Activated B cell treated with CpG ODN at 0.5 μM for 24 hours (primary cell): ENCODE measurements at regions of chr11 and their contacts with region 1.

Region 1: DNA sequence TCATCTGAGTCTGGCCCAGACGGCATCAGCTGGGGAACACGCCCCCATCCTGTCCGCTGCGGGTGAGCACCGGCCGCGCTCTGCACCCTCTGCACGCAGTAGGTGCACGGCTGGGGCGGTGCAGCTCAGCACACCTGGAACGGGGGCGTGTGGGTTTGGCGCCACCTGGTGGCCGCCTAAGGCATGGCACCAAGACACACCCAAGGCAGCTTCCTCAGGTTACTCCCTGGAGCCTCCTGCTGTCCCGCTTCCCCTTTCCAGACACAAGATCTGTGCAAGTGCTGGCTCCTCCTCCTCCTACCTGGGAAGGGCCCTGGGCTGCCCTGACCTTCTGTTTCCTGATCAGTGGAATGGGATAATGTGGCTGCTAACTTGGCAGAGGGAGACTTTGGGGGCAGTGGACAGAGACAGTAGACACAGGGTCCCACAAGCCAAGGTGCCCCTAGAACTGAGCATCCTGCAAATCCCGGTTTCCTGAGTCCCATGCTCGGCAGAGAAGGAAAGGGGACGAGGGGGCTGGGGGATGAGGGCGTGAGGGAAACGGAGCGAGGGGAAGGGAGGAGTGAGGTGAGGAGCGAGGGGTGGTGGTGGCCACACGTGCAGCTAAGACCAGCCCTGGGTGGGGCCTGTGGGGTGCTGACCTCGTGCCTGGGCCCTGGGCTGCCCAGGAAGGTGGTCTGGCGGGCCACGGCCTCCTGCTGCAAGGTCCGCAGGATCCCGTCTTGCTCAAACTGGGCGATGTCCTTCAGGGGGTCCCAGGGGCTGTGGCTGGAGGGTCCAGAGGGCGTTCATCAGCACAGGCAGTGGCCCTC is 34.8 kb upstream of the CARS1 start:
- DNase-seq: peak; percentile 73
- ATAC-seq: peak; percentile 89
- H3K4me3 Mint-ChIP-seq: no peak overlapping the region
- H3K27ac Mint-ChIP-seq: no peak overlapping the region
- H3K4me1 Mint-ChIP-seq: peaks cover 2% of the 10 kb centered on the region
- H3K27me3 Mint-ChIP-seq: peaks cover 3% of the 10 kb centered on the region
- CTCF ChIP-seq: peak; percentile 87

Region 2: GRCh38 chr11:2428322-2428795 is 663.6 kb before region 1 on chr11:
- CTCF ChIA-PET with region 1: no interaction called
- POLR2A ChIA-PET with region 1: no interaction called
- intact Hi-C with region 1: loop called (anchors 2 kb)
- DNase-seq: peak; percentile 76
- ATAC-seq: peak; percentile 97
- H3K4me3 Mint-ChIP-seq: no peak overlapping the region
- H3K27ac Mint-ChIP-seq: no peak overlapping the region
- H3K4me1 Mint-ChIP-seq: no peaks in the 10 kb centered on the region
- H3K27me3 Mint-ChIP-seq: no peaks in the 10 kb centered on the region
- CTCF ChIP-seq: peak; percentile 57

Region 3: GRCh38 chr11:2892215-2893020 is 199.6 kb before region 1 on chr11:
- CTCF ChIA-PET with region 1: interaction called, 16 read pairs
- POLR2A ChIA-PET with region 1: interaction called, 3 read pairs
- intact Hi-C with region 1: loop called (anchors 1 kb)
- DNase-seq: peak; percentile 61
- ATAC-seq: peak; percentile 68
- H3K4me3 Mint-ChIP-seq: peak overlapping the region; percentile 72
- H3K27ac Mint-ChIP-seq: no peak overlapping the region
- H3K4me1 Mint-ChIP-seq: peaks cover 15% of the 10 kb centered on the region
- H3K27me3 Mint-ChIP-seq: no peaks in the 10 kb centered on the region
- CTCF ChIP-seq: peak; percentile 74

Region 4: DNA sequence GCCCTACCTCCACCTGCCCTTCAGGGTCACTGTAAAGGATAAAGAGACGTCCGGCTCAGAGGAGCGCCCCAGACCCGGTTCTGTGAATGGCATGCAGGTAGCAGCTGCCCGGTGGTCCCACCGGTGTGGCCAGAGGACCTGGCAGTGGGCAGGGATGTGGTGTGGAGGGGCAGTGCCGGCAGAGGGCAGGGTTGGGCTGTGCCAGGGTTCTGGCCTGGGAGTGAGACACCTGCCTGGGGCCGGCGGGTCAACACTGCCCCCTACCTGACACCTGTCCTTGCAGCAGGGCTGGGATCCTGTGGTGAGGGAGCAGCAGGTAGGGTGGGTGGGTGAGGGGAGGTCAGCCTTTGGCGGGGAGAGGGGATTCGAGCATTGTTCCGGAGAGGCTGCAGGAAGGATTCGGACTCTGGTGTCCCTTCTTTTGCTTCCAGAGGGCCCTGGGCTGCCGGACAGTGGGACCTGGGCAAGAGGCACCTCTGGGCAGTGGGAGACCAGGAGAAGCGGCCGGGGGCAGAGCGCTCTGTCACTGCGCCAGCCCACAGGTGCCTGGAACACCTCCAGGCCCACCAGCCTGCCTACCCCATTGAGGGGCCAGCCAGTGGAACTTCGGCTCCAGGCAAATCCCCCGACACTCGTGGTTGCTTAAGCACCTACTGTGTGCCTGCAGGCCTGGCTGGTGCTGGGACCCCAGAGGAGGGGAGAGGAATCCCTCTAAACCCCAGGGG is 161.1 kb before region 1 on chr11:
- CTCF ChIA-PET with region 1: interaction called, 7 read pairs
- POLR2A ChIA-PET with region 1: no interaction called
- intact Hi-C with region 1: loop called (anchors 1 kb)
- DNase-seq: peak; percentile 40
- ATAC-seq: peak; percentile 44
- H3K4me3 Mint-ChIP-seq: peak overlapping the region; percentile 82
- H3K27ac Mint-ChIP-seq: no peak overlapping the region
- H3K4me1 Mint-ChIP-seq: peaks cover 15% of the 10 kb centered on the region
- H3K27me3 Mint-ChIP-seq: peaks cover 23% of the 10 kb centered on the region
- CTCF ChIP-seq: no peak

Region 5: GRCh38 chr11:2975594-2975993 is 116.4 kb before region 1 on chr11:
- CTCF ChIA-PET with region 1: interaction called, 49 read pairs
- POLR2A ChIA-PET with region 1: interaction called, 3 read pairs
- intact Hi-C with region 1: loop called (anchors 1 kb)
- DNase-seq: no peak
- ATAC-seq: peak; percentile 52
- H3K4me3 Mint-ChIP-seq: no peak overlapping the region
- H3K27ac Mint-ChIP-seq: no peak overlapping the region
- H3K4me1 Mint-ChIP-seq: peaks cover 2% of the 10 kb centered on the region
- H3K27me3 Mint-ChIP-seq: no peaks in the 10 kb centered on the region
- CTCF ChIP-seq: no peak

Region 6: GRCh38 chr11:3037040-3037944 is 54.7 kb before region 1 on chr11:
- CTCF ChIA-PET with region 1: interaction called, 89 read pairs
- POLR2A ChIA-PET with region 1: interaction called, 3 read pairs
- intact Hi-C with region 1: loop called (anchors 1 kb)
- DNase-seq: peak; percentile 40
- ATAC-seq: peak; percentile 48
- H3K4me3 Mint-ChIP-seq: no peak overlapping the region
- H3K27ac Mint-ChIP-seq: peak overlapping the region; percentile 70
- H3K4me1 Mint-ChIP-seq: peaks cover 32% of the 10 kb centered on the region
- H3K27me3 Mint-ChIP-seq: no peaks in the 10 kb centered on the region
- CTCF ChIP-seq: no peak

Region 7: GRCh38 chr11:3049430-3050243 is 42.4 kb before region 1 on chr11:
- CTCF ChIA-PET with region 1: interaction called, 80 read pairs
- POLR2A ChIA-PET with region 1: interaction called, 3 read pairs
- intact Hi-C with region 1: loop called (anchors 1 kb)
- DNase-seq: peak; percentile 60
- ATAC-seq: peak; percentile 92
- H3K4me3 Mint-ChIP-seq: peak overlapping the region; percentile 80
- H3K27ac Mint-ChIP-seq: peak overlapping the region; percentile 93
- H3K4me1 Mint-ChIP-seq: peaks cover 47% of the 10 kb centered on the region
- H3K27me3 Mint-ChIP-seq: no peaks in the 10 kb centered on the region
- CTCF ChIP-seq: no peak

Region 8: GRCh38 chr11:3111919-3112671 is 20.1 kb after region 1 on chr11:
- CTCF ChIA-PET with region 1: no interaction called
- POLR2A ChIA-PET with region 1: no interaction called
- intact Hi-C with region 1: no loop called
- DNase-seq: no peak
- ATAC-seq: no peak
- H3K4me3 Mint-ChIP-seq: no peak overlapping the region
- H3K27ac Mint-ChIP-seq: no peak overlapping the region
- H3K4me1 Mint-ChIP-seq: no peaks in the 10 kb centered on the region
- H3K27me3 Mint-ChIP-seq: peaks cover 3% of the 10 kb centered on the region
- CTCF ChIP-seq: no peak

Region 9: DNA sequence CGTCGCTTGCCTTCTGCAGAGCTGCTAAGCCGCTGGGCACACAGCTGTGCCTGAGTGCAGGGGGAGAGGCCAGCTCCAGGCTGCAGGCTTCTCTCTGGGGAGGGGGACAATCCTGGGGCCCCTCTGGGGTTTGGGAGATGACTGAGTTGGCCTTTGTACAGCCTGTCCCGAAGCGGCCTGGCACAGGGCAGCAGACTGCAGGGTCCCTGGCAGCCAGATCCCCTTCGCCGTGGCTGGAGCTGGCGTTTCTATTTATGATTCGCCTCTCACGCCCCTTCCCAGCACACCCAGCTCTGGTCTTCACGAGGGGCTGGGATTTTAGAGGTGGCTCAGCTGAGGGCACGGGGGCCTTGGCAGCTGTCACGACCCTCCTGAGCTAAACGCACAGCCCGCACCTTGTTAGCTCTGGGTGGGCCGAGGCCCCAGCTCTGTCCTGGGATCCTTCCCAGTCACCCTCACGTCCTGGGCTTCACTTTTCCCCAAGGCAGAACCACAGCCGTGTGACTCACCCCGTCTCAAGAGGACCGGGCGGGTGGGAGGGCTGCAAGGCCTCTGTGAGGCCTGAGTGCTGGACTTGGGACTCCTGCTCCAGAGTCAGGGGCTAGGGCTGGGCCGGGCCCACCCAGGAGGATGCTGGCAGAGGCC is 54.7 kb after region 1 on chr11:
- CTCF ChIA-PET with region 1: no interaction called
- POLR2A ChIA-PET with region 1: no interaction called
- intact Hi-C with region 1: no loop called
- DNase-seq: no peak
- ATAC-seq: no peak
- H3K4me3 Mint-ChIP-seq: no peak overlapping the region
- H3K27ac Mint-ChIP-seq: no peak overlapping the region
- H3K4me1 Mint-ChIP-seq: no peaks in the 10 kb centered on the region
- H3K27me3 Mint-ChIP-seq: peaks cover 2% of the 10 kb centered on the region
- CTCF ChIP-seq: no peak